Adrenal gland (tissue), 19 donors: ENCODE measurements at regions of chr6 and their contacts with region 1.

Region 1: DNA sequence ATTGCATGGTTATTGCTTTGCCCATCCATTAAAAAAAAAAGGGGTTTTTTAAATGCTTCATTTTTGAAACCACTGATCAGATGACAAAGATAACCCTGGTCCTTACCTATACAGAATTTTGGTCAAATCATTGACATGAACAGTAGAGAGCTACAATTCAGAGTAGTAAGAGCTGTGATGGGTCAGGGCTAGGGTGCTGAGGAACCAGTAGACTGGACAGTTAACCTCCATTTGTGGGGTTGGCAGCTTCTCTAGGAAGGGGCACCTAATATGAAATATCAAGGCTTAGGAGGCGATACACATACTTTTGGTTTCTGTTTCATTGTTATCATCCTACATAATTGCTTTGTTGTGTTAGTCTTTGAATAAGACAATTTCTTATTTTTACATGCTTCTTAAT is 55.1 kb downstream of the ORC3 start:
- DNase-seq: no peak
- H3K4me3 ChIP-seq: no peak overlapping the region
- H3K27ac ChIP-seq: no peak overlapping the region
- H3K4me1 ChIP-seq: peaks cover 0 to 6% of the 10 kb centered on the region in 2 donors
- H3K27me3 ChIP-seq: no peaks in the 10 kb centered on the region
- CTCF ChIP-seq: no peak
- POLR2A ChIP-seq: no peak

Region 2: DNA sequence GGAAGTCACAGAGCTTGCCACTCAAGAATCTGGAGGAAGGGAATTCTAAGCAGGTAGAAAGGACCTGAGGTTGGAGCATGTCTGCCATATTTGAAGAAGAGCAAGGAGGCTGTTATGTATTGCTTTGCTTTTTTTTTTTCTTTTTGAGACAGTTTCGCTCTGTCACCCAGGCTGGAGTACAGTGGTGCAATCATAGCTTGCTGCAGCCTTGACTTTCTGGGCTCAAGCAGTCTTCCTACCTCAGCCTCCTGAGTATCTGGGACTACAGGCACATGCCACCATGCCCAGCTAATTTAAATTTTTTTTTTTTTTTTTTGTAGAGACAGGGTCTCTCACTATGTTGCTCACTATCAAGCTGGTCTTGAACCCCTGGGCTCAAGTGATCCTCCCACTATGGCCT is 14.3 kb before region 1 on chr6:
- intact Hi-C with region 1: loop called in 1 of 2 experiments (anchors 2 kb)
- DNase-seq: peak in 5 of 7 donors; percentile 31 to 62 (median 42)
- H3K4me3 ChIP-seq: no peak overlapping the region
- H3K27ac ChIP-seq: peak overlapping the region in 1 of 5 donors; percentile 41
- H3K4me1 ChIP-seq: peaks cover 0 to 26% of the 10 kb centered on the region in 2 donors
- H3K27me3 ChIP-seq: no peaks in the 10 kb centered on the region
- CTCF ChIP-seq: no peak
- POLR2A ChIP-seq: no peak